ENCODE measurements at regions of chr12 and their contacts with region 1.

Region 1: GRCh38 chr12:64610149-64610678 is at the start of gene RASSF3:
- DNase-seq: peak; percentile 66
- H3K4me3 ChIP-seq: peak within 1 kb of the TSS; percentile 65 to 81 (median 67)
- H3K27ac ChIP-seq: peak within 1 kb of the TSS; percentile 84
- H3K4me1 ChIP-seq: peaks cover 18% of the 10 kb centered on the region
- H3K27me3 ChIP-seq: no peaks in the 10 kb centered on the region
- CTCF ChIP-seq: no peak
- total RNA-seq, gene RASSF3: 23.0 to 24.3 TPM

Region 2: DNA sequence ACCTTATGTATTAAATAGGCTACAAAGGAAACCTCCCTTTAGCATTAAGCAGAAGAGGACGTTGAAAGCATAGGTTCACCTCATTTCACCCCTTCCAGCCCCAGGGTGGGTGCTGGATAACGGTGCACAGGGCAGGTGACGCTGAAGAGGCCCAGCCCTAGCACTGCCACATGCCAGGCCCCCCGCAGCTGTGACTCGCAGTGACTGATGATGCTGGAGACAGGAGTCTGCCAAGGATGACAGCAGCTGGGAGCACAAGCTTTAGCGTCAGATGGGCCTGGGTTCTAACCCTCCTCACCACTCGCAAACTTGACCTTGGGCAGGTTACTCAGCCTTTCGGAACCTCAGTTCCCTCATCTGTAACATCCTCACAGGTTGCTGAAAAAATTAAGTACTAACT is 81.6 kb before region 1 on chr12:
- CTCF ChIA-PET with region 1: no interaction called
- dilution Hi-C with region 1: no loop called
- in situ Hi-C with region 1: no loop called
- intact Hi-C with region 1: no loop called
- DNase-seq: no peak
- H3K4me3 ChIP-seq: no peak overlapping the region
- H3K27ac ChIP-seq: no peak overlapping the region
- H3K4me1 ChIP-seq: no peaks in the 10 kb centered on the region
- H3K27me3 ChIP-seq: no peaks in the 10 kb centered on the region
- CTCF ChIP-seq: no peak

Region 3: DNA sequence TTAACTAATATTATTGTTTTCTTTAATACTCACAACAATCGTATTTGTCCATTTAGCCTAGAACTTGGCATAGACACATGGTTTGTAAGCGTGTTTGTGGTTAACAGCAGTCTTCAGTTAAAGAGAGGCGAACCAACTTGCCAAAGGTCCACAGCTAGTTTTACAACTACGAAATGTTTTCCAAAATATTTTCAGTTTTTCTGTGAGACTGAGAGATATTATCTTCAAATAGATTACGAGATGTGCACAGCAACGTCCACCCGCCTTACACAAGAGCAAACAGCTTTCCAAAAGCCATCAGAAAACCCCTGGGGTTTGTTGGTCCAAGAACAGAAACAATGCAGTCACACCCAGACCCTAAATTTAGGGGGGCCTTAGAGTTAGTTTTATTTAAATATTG is 58.5 kb before region 1 on chr12:
- CTCF ChIA-PET with region 1: interaction called, 4 read pairs
- dilution Hi-C with region 1: no loop called
- in situ Hi-C with region 1: no loop called
- intact Hi-C with region 1: loop called (anchors 1 kb)
- DNase-seq: no peak
- H3K4me3 ChIP-seq: no peak overlapping the region
- H3K27ac ChIP-seq: no peak overlapping the region
- H3K4me1 ChIP-seq: no peaks in the 10 kb centered on the region
- H3K27me3 ChIP-seq: no peaks in the 10 kb centered on the region
- CTCF ChIP-seq: no peak

Region 4: DNA sequence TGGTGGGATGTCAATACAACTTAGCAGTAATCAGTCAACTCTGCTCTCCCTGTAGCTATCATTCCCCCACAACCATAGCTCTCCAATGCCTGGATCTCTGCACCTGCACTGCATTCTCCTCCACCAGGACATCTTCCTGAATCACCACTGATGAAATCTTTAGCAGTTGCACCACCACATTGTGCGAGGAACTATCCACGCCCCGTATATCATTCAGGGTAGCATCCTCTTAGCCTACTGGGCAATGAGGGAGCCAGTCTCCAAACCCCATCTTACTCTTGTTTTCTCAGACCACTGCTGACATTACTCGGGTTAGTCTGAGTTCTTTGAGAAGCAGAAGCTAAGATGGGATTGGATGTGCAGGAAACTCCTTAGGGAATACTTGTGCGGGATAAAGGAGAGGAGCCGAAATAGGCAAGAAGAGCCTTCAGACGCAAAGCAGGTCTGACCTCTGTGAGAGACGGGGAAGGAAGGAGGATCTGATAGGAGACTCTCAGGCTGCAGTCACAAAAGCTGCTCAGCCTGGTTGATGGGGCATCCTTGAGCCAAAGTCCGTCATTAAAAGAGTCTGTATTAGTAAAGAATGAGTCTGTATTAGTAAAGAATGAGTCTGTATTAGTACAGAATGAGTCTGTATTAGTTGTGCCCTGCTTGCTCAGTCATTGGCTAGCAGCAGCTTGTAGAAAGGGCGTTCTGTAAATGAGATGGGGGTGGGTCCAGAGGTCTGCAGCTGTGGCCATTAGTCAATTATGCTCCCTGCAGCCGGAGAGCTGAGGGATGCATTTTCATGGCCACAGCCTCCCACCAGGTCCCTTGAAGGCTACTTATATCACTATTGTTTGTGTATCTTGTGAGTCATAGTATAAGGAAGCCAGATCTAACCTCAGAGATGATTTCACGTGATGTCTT is 49.6 kb before region 1 on chr12:
- CTCF ChIA-PET with region 1: no interaction called
- dilution Hi-C with region 1: no loop called
- in situ Hi-C with region 1: no loop called
- intact Hi-C with region 1: loop called (anchors 1 kb)
- DNase-seq: peak; percentile 77
- H3K4me3 ChIP-seq: no peak overlapping the region
- H3K27ac ChIP-seq: no peak overlapping the region
- H3K4me1 ChIP-seq: peaks cover 13% of the 10 kb centered on the region
- H3K27me3 ChIP-seq: no peaks in the 10 kb centered on the region
- CTCF ChIP-seq: no peak

Region 5: DNA sequence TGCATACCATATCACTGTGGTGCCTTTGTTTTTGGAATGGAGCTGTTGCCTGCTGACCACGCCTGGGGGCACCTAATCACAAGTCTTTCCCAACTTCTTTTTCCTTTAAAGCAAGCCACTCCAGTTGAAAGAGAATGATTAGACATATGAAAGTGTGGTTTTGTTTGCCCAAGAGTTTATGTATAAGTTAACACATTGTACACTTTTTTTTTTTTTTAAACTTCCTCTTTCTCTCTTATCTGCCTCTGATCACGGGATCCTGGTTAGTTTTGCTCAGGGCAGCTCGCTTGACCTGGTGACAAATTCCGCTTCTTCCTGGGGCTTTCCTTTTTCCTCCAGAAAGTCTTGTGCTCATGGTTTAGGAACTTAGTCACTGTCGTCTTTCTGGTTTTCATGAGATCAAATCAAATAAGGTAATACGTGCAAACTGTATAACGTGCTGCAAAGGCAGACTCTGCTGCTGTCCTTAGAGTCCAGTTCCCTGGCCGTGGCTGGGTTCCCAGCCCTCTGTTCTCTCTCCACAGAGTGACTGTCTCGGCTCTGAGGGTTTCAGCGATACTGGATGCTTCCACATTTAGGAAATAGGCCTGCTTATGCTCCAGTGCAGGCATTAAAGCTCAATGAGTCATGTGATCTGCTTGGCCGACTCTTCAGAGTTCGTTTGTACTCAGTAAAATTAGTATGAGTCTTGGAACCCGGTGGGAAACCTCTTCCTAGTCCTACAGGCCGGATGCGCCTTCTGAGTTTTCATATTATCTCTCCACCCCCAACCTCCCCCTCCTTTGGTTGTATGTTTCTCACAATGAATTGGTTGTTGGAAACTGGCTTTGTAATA is 15.2 kb after region 1 on chr12:
- CTCF ChIA-PET with region 1: no interaction called
- dilution Hi-C with region 1: no loop called
- in situ Hi-C with region 1: no loop called
- intact Hi-C with region 1: loop called (anchors 2 kb)
- DNase-seq: peak; percentile 95
- H3K4me3 ChIP-seq: peak overlapping the region; percentile 42 to 53 (median 52)
- H3K27ac ChIP-seq: peak overlapping the region; percentile 98
- H3K4me1 ChIP-seq: peaks cover 16% of the 10 kb centered on the region
- H3K27me3 ChIP-seq: no peaks in the 10 kb centered on the region
- CTCF ChIP-seq: no peak

Region 6: DNA sequence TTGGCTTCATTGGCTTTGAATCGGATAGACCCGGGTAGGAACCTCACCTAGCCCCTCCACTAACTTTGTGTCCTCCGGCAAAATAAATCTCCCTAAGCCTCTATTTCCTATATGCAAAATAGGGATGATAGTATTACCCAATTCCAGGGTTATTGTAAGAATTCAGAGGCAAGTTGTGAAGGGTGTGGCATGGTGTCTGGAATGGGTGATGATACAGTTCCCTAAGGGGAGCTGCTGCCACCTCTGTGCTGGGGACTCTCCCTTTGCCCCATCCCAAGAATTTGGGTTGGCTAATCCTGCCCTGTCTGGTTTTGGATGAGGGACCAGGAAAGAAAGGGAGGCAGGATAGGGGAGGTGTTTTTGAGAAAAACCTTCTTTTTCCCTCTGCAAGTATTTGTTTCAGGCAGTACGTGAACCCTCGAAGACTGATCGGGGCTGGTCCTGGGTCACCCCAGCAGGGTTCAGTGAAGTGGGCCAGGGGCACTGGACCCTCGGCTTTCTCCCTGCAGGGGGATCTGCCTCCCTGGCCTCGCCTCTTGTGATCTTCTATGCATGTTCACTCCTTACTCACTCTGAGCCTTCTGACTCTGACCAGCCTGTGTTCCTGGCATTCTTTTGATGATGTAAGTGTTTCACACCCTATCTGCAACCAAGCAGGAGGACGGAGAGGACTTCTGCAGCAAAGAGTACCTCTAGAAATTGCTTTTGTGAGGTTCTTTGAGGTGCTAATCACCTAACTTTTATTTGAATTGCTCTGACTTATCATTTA is 60.8 kb after region 1 on chr12:
- CTCF ChIA-PET with region 1: no interaction called
- dilution Hi-C with region 1: no loop called
- in situ Hi-C with region 1: loop called in 1 of 2 experiments (anchors 10 kb)
- intact Hi-C with region 1: loop called (anchors 1 kb)
- DNase-seq: peak; percentile 78
- H3K4me3 ChIP-seq: no peak overlapping the region
- H3K27ac ChIP-seq: peak overlapping the region; percentile 89
- H3K4me1 ChIP-seq: peaks cover 49% of the 10 kb centered on the region
- H3K27me3 ChIP-seq: no peaks in the 10 kb centered on the region
- CTCF ChIP-seq: no peak

Region 7: GRCh38 chr12:64679487-64679983 is 69.3 kb after region 1 on chr12:
- CTCF ChIA-PET with region 1: interaction called, 4 read pairs
- dilution Hi-C with region 1: no loop called
- in situ Hi-C with region 1: loop called in 1 of 2 experiments (anchors 10 kb)
- intact Hi-C with region 1: loop called (anchors 1 kb)
- DNase-seq: peak; percentile 92
- H3K4me3 ChIP-seq: peak overlapping the region; percentile 16 to 41 (median 32)
- H3K27ac ChIP-seq: peak overlapping the region; percentile 92
- H3K4me1 ChIP-seq: peaks cover 35% of the 10 kb centered on the region
- H3K27me3 ChIP-seq: no peaks in the 10 kb centered on the region
- CTCF ChIP-seq: no peak

Region 8: DNA sequence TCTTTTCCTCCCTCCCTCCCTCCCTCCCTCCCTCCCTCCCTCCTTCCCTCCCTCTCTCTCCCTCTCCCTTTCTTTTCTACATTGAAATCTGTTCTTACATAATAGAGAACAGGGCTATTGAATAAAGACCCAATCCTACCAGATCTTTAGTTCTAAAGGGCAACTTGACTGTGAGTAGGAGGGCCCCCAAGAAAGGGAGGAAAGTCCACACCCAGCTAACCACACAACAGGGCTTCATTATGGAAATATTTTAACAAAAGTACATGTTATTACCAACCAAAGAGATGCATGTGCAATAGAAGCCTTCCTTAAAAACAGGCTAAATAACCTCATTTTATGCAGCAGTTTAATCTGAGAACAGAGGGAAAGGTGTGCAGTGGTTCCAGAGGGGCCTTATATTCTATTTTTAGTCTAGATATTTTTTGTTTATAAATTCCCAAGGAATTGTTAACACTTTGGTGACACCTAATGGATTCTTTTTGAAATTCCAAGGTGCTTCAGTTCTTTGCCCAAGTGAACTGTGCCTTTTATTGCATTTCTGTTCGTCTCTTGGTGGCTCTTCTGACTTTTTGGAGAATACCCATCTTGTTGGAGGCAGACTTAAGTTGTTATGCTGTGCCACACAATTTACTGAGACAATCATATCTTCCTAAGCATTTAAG is 86.0 kb after region 1 on chr12:
- CTCF ChIA-PET with region 1: no interaction called
- dilution Hi-C with region 1: no loop called
- in situ Hi-C with region 1: no loop called
- intact Hi-C with region 1: loop called (anchors 1 kb)
- DNase-seq: no peak
- H3K4me3 ChIP-seq: no peak overlapping the region
- H3K27ac ChIP-seq: no peak overlapping the region
- H3K4me1 ChIP-seq: no peaks in the 10 kb centered on the region
- H3K27me3 ChIP-seq: no peaks in the 10 kb centered on the region
- CTCF ChIP-seq: peak; percentile 13 to 39